Pancreas (tissue), 10 donors: ENCODE measurements at regions of chr15 and their contacts with region 1.

Region 1: DNA sequence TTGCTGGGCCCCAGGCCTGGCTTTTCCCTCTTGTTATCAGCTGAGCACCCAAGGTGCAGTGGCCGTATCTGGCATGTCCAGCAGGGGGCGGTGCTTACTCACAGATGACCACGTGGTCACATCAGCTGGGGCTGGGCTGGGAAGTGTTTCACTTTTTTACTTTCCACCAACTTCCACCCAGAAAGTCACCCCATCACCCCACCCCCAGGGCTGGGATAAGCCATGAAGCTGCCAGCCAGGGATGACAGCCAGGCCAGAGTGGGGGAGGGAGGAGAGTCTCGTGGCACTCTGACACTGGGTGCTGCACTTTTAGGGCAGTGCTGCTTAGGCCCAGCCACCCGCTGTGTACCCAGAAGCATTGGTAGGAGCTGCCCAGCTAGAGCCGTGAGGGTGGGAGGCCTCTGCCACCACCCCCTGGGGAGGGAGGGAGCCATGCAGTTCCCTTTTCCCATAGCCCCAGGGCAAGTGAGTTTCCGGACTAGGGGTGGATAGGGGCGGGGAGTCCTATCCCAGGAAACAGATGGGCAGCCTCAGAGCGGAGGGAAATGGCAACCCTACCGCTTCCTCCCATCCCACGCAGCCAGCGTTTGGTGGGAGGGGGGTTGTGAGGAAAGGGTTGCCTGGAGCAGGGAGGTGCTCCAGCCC is 6.1 kb downstream of the PPCDC start:
- DNase-seq: peak; percentile 78 to 98 (median 93)
- ATAC-seq: peak; percentile 84 to 94 (median 92)
- H3K4me3 ChIP-seq: no peak overlapping the region
- H3K27ac ChIP-seq: peak overlapping the region in 1 of 4 donors; percentile 36
- H3K4me1 ChIP-seq: peaks cover 0 to 13% (median 0%) of the 10 kb centered on the region in 3 donors
- H3K27me3 ChIP-seq: no peaks in the 10 kb centered on the region
- CTCF ChIP-seq: peak; percentile 88 to 95 (median 91)

Region 2: GRCh38 chr15:75207618-75208500 is 178.4 kb after region 1 on chr15:
- intact Hi-C with region 1: loop called (anchors 2 to 10 kb)
- DNase-seq: no peak
- ATAC-seq: no peak
- H3K4me3 ChIP-seq: no peak overlapping the region
- H3K27ac ChIP-seq: no peak overlapping the region
- H3K4me1 ChIP-seq: peaks cover 0 to 18% (median 12%) of the 10 kb centered on the region in 3 donors
- H3K27me3 ChIP-seq: no peaks in the 10 kb centered on the region
- CTCF ChIP-seq: no peak